ENCODE measurements at regions of chr22 and their contacts with region 1.

Region 1: GRCh38 chr22:42614312-42615091 is at the start of gene POLDIP3:
- DNase-seq: peak; percentile 100
- ATAC-seq: peak; percentile 75
- H3K4me3 Mint-ChIP-seq: peak within 1 kb of the TSS; percentile 97
- H3K27ac Mint-ChIP-seq: peak within 1 kb of the TSS; percentile 99
- H3K4me1 Mint-ChIP-seq: peaks cover 54% of the 10 kb centered on the region
- H3K27me3 Mint-ChIP-seq: no peaks in the 10 kb centered on the region
- total RNA-seq, gene POLDIP3: 77.6 to 88.6 TPM

Region 2: GRCh38 chr22:41832553-41833368 is 781.7 kb before region 1 on chr22 and contains the start of gene SREBF2:
- CTCF ChIA-PET with region 1: no interaction called
- POLR2A ChIA-PET with region 1: interaction called, 3 read pairs
- intact Hi-C with region 1: loop called in 1 of 2 experiments (anchors 1 kb)
- DNase-seq: peak; percentile 100
- ATAC-seq: peak; percentile 94
- H3K4me3 Mint-ChIP-seq: peak within 1 kb of the TSS; percentile 96
- H3K27ac Mint-ChIP-seq: peak within 1 kb of the TSS; percentile 99
- H3K4me1 Mint-ChIP-seq: peaks cover 45% of the 10 kb centered on the region
- H3K27me3 Mint-ChIP-seq: no peaks in the 10 kb centered on the region
- total RNA-seq, gene SREBF2: 101 to 105 TPM

Region 3: GRCh38 chr22:42079319-42080251 is 534.9 kb before region 1 on chr22 and contains the start of gene SMDT1:
- CTCF ChIA-PET with region 1: no interaction called
- POLR2A ChIA-PET with region 1: no interaction called
- intact Hi-C with region 1: loop called in 1 of 2 experiments (anchors 2 kb)
- DNase-seq: peak; percentile 99
- ATAC-seq: peak; percentile 95
- H3K4me3 Mint-ChIP-seq: peak within 1 kb of the TSS; percentile 90
- H3K27ac Mint-ChIP-seq: peak within 1 kb of the TSS; percentile 96
- H3K4me1 Mint-ChIP-seq: peaks cover 29% of the 10 kb centered on the region
- H3K27me3 Mint-ChIP-seq: no peaks in the 10 kb centered on the region
- total RNA-seq, gene SMDT1: 17.2 to 45.4 TPM

Region 4: GRCh38 chr22:42500161-42500835 is 114.2 kb before region 1 on chr22:
- CTCF ChIA-PET with region 1: no interaction called
- POLR2A ChIA-PET with region 1: no interaction called
- intact Hi-C with region 1: loop called in 1 of 2 experiments (anchors 2 kb)
- DNase-seq: peak; percentile 91
- ATAC-seq: peak; percentile 98
- H3K4me3 Mint-ChIP-seq: peak overlapping the region; percentile 38
- H3K27ac Mint-ChIP-seq: no peak overlapping the region
- H3K4me1 Mint-ChIP-seq: peaks cover 11% of the 10 kb centered on the region
- H3K27me3 Mint-ChIP-seq: no peaks in the 10 kb centered on the region

Region 5: GRCh38 chr22:42544686-42545085 is 69.8 kb before region 1 on chr22:
- CTCF ChIA-PET with region 1: no interaction called
- POLR2A ChIA-PET with region 1: no interaction called
- intact Hi-C with region 1: no loop called
- DNase-seq: no peak
- ATAC-seq: no peak
- H3K4me3 Mint-ChIP-seq: no peak overlapping the region
- H3K27ac Mint-ChIP-seq: no peak overlapping the region
- H3K4me1 Mint-ChIP-seq: no peaks in the 10 kb centered on the region
- H3K27me3 Mint-ChIP-seq: no peaks in the 10 kb centered on the region

Region 6: DNA sequence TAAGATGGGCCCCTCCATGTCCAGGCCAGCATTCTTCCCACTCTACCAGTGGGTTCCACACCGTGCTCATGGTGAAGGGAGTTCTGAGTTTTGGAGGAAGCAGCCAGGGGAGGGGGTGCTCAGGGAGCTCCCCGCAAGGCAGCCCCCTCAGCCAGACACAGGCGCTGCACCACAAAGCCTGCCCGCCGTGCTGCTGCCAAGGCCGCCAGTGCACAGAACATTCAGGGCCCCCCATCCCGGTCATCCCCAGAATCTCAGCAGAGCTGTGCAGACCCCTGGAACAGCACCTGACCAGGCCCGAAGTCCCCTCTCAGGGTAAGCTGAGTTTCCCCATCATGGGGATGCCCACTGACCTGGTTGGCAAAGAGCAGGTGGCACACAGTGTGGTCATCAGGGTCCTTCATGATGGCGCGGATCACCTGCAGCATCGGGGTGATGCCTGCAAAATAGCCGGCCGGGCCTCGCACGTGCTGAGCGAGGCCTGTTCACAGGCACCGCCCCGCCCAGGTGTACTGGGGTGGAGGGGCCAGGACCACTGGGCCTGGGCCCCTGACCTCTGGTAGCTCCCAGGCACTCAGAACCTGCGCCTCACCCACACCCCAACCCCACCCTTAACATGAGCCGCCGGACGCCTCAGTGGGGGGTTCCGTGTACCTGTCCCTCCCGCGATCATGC is 12.6 kb after region 1 on chr22:
- CTCF ChIA-PET with region 1: interaction called, 5 read pairs
- POLR2A ChIA-PET with region 1: interaction called, 14 read pairs
- intact Hi-C with region 1: no loop called
- DNase-seq: no peak
- ATAC-seq: no peak
- H3K4me3 Mint-ChIP-seq: no peak overlapping the region
- H3K27ac Mint-ChIP-seq: no peak overlapping the region
- H3K4me1 Mint-ChIP-seq: no peaks in the 10 kb centered on the region
- H3K27me3 Mint-ChIP-seq: no peaks in the 10 kb centered on the region

Region 7: DNA sequence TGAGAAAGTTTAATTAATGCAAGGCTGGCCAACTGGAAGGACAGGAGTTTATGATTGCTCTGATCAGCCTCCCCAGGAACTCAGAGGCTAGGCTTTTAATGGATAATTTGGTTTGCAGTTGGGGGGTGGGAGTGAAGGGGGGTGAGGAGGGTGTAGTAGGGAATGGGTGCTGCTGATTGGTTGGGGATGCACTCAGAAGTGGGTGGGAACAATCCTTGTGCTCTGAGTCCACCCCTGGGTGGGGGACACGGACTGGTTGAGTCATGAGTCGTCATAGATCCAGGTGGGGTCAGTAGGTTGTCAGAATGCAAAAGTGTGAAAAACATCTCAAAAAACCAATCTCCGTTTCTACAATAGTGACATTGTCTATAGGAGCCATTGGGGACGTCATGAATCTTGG is 55.5 kb after region 1 on chr22:
- CTCF ChIA-PET with region 1: no interaction called
- POLR2A ChIA-PET with region 1: no interaction called
- intact Hi-C with region 1: no loop called
- DNase-seq: no peak
- ATAC-seq: no peak
- H3K4me3 Mint-ChIP-seq: no peak overlapping the region
- H3K27ac Mint-ChIP-seq: no peak overlapping the region
- H3K4me1 Mint-ChIP-seq: peaks cover 6% of the 10 kb centered on the region
- H3K27me3 Mint-ChIP-seq: peaks cover 3% of the 10 kb centered on the region

Region 8: GRCh38 chr22:42856865-42857704 is 242.6 kb after region 1 on chr22 and contains the start of gene ARFGAP3:
- CTCF ChIA-PET with region 1: no interaction called
- POLR2A ChIA-PET with region 1: interaction called, 10 read pairs
- intact Hi-C with region 1: loop called in 1 of 2 experiments (anchors 1 kb)
- DNase-seq: peak; percentile 98
- ATAC-seq: peak; percentile 91
- H3K4me3 Mint-ChIP-seq: peak within 1 kb of the TSS; percentile 83
- H3K27ac Mint-ChIP-seq: peak within 1 kb of the TSS; percentile 85
- H3K4me1 Mint-ChIP-seq: peaks cover 11% of the 10 kb centered on the region
- H3K27me3 Mint-ChIP-seq: peaks cover 6% of the 10 kb centered on the region
- total RNA-seq, gene ARFGAP3: 22.5 to 23.0 TPM

Region 9: GRCh38 chr22:42933481-42934091 is 319.1 kb after region 1 on chr22:
- CTCF ChIA-PET with region 1: no interaction called
- POLR2A ChIA-PET with region 1: no interaction called
- intact Hi-C with region 1: no loop called
- DNase-seq: peak; percentile 49
- ATAC-seq: peak; percentile 57
- H3K4me3 Mint-ChIP-seq: peak overlapping the region; percentile 35
- H3K27ac Mint-ChIP-seq: peak overlapping the region; percentile 60
- H3K4me1 Mint-ChIP-seq: peaks cover 68% of the 10 kb centered on the region
- H3K27me3 Mint-ChIP-seq: no peaks in the 10 kb centered on the region

Region 10: GRCh38 chr22:43187171-43188099 is 572.9 kb after region 1 on chr22:
- CTCF ChIA-PET with region 1: no interaction called
- POLR2A ChIA-PET with region 1: interaction called, 4 read pairs
- intact Hi-C with region 1: loop called in 1 of 2 experiments (anchors 1 kb)
- DNase-seq: peak; percentile 98
- ATAC-seq: peak; percentile 96
- H3K4me3 Mint-ChIP-seq: peak overlapping the region; percentile 83
- H3K27ac Mint-ChIP-seq: peak overlapping the region; percentile 93
- H3K4me1 Mint-ChIP-seq: peaks cover 23% of the 10 kb centered on the region
- H3K27me3 Mint-ChIP-seq: no peaks in the 10 kb centered on the region